Calu3 (cell line): ENCODE measurements at regions of chr5 and their contacts with region 1.

Region 1: GRCh38 chr5:11791436-11792173 is 112.6 kb downstream of the CTNND2 start:
- DNase-seq: peak; percentile 47
- H3K4me3 Mint-ChIP-seq: no peak overlapping the region
- H3K27ac Mint-ChIP-seq: no peak overlapping the region
- H3K4me1 Mint-ChIP-seq: peaks cover 29% of the 10 kb centered on the region
- H3K27me3 Mint-ChIP-seq: no peaks in the 10 kb centered on the region
- CTCF ChIP-seq: no peak

Region 2: DNA sequence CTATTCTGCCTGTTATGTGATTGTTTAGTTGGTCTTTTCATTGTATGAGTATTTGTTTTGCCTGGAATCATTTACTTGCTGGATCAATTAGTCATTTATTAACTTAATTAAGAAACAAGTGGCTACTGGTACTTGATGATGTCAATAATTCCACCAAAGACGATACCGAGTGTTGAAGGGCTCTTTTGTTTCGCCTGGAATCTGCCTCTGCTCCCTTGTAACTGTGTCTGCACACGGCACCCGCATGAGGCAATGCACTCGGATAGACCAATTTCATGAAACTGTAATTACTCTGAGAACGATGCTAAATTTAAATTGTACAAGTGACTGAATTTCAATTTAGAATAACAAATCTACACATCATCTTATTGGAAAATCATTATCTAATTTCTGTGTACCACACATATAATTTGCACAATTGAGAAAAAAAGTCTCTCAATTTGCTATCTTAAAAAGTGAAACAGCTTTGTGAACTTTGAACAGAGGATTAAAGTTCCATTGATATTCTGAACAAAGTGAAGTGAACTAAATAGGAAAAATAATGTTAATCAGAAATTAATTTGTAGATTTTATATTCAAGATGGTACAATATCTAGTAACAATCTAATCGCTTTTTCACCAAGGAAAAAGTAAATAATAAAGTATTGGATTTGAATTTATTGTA is 30.5 kb before region 1 on chr5:
- CTCF ChIA-PET with region 1: no interaction called
- intact Hi-C with region 1: loop called (anchors 1 kb)
- DNase-seq: peak; percentile 69
- H3K4me3 Mint-ChIP-seq: peak overlapping the region; percentile 41
- H3K27ac Mint-ChIP-seq: peak overlapping the region; percentile 72
- H3K4me1 Mint-ChIP-seq: no peaks in the 10 kb centered on the region
- H3K27me3 Mint-ChIP-seq: no peaks in the 10 kb centered on the region
- CTCF ChIP-seq: no peak